Activated CD4-positive, alpha-beta T cell treated with anti-CD3 and anti-CD28 coated beads, Interleukin-2, amount 10 ng/mL, durations not matched to agents 24 days and 14 days (primary cell): ENCODE measurements at regions of chr9 and their contacts with region 1.

Region 1: DNA sequence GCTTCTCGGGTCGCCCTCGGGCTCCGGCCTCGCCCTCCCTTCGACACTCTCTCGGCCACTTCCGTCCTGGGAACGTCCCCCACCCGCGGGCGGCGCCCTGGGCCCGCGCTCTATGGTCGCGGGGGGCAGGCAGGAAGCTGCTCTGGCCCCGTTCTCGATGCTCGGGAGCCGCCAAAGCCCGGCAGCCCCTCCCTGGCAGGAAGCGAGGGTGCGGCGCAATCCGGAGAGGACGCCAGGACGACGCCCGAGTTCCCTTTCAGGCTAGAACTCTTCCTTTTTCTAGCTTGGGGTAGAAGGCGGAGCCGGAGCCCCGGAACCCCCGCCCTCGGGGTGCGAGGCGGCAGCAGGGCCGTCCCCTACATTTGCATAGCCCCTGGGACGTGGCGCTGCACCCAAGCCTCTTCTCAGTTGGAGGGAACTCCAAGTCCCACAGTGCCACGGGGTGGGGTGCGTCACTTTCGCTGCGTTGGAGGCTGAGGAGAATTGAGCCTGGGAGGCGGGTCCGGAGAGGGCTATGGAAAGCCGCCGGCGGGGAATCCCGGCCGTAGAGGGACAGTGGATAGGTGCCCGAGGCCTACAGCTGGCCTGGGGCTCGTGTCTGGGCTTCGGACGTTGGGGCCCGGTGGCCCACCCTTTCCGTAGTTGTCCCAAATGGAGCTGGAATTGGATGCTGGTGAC is at the starts of genes CREB3 and TLN1:
- DNase-seq: peak; percentile 99
- H3K4me3 Mint-ChIP-seq: no peak within 1 kb of the TSS
- H3K27ac Mint-ChIP-seq: peak within 1 kb of the TSS; percentile 92
- H3K4me1 Mint-ChIP-seq: peaks cover 22% of the 10 kb centered on the region
- H3K27me3 Mint-ChIP-seq: no peaks in the 10 kb centered on the region
- total RNA-seq, gene CREB3: 27.0 and 27.6 TPM in 2 replicates
- total RNA-seq, gene TLN1: 220 and 243 TPM in 2 replicates

Region 2: GRCh38 chr9:35111001-35111933 is 621.0 kb before region 1 on chr9:
- intact Hi-C with region 1: loop called (anchors 5 kb)
- DNase-seq: peak; percentile 98
- H3K4me3 Mint-ChIP-seq: peak overlapping the region; percentile 71
- H3K27ac Mint-ChIP-seq: peak overlapping the region; percentile 85
- H3K4me1 Mint-ChIP-seq: peaks cover 49% of the 10 kb centered on the region
- H3K27me3 Mint-ChIP-seq: no peaks in the 10 kb centered on the region

Region 3: GRCh38 chr9:35646533-35647265 is 85.6 kb before region 1 on chr9:
- intact Hi-C with region 1: loop called (anchors 1 kb)
- DNase-seq: peak; percentile 98
- H3K4me3 Mint-ChIP-seq: peak overlapping the region; percentile 92
- H3K27ac Mint-ChIP-seq: peak overlapping the region; percentile 96
- H3K4me1 Mint-ChIP-seq: peaks cover 41% of the 10 kb centered on the region
- H3K27me3 Mint-ChIP-seq: no peaks in the 10 kb centered on the region

Region 4: DNA sequence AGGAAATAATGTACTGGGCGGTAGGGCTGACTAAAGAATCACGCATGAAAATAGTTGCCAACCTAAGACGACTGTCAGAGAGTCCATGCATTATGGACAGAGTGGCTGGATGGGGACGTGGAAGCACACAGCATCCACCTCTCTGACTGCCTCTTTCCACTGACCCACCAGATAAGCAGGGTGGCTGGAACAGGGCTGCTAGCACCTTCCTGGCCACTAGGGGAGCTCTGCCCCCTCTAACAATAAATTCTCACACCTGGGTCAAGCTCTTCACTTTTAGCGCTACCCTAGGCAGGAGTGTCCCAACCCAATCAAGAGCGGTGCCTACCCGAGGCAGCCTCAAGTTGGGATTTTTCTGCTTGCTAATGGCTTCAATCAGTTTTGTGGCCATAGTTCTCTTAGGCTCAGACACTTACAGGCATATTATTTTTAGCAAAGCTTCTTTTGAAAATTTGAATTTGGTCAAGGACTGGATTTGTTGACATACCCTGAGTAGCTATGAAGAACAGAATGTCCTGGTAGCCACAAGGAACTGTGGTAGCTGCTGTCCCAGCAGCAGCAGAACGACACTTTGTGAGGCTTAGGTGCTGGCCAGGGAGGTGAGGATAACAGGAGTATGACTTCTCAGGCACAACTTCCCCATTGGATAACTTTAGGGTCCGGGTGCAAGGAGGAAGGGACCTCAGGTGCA is 35.6 kb before region 1 on chr9:
- intact Hi-C with region 1: loop called (anchors 2 kb)
- DNase-seq: peak; percentile 87
- H3K4me3 Mint-ChIP-seq: no peak overlapping the region
- H3K27ac Mint-ChIP-seq: peak overlapping the region; percentile 4
- H3K4me1 Mint-ChIP-seq: peaks cover 5% of the 10 kb centered on the region
- H3K27me3 Mint-ChIP-seq: no peaks in the 10 kb centered on the region

Region 5: GRCh38 chr9:35756275-35757225 is 24.3 kb after region 1 on chr9:
- intact Hi-C with region 1: loop called (anchors 1 kb)
- DNase-seq: peak; percentile 94
- H3K4me3 Mint-ChIP-seq: peak overlapping the region; percentile 99
- H3K27ac Mint-ChIP-seq: peak overlapping the region; percentile 98
- H3K4me1 Mint-ChIP-seq: peaks cover 39% of the 10 kb centered on the region
- H3K27me3 Mint-ChIP-seq: no peaks in the 10 kb centered on the region

Region 6: GRCh38 chr9:35972093-35972492 is 239.8 kb after region 1 on chr9:
- intact Hi-C with region 1: no loop called
- DNase-seq: no peak
- H3K4me3 Mint-ChIP-seq: no peak overlapping the region
- H3K27ac Mint-ChIP-seq: no peak overlapping the region
- H3K4me1 Mint-ChIP-seq: peaks cover 7% of the 10 kb centered on the region
- H3K27me3 Mint-ChIP-seq: peaks cover 78% of the 10 kb centered on the region